Dendritic cell treated with granulocyte-macrophage colony-stimulating factor and Interleukin-4, amounts not matched to agents 40 ng/mL and 50 ng/mL, for 4 days (primary cell): ENCODE measurements at regions of chr5 and their contacts with region 1.

Region 1: DNA sequence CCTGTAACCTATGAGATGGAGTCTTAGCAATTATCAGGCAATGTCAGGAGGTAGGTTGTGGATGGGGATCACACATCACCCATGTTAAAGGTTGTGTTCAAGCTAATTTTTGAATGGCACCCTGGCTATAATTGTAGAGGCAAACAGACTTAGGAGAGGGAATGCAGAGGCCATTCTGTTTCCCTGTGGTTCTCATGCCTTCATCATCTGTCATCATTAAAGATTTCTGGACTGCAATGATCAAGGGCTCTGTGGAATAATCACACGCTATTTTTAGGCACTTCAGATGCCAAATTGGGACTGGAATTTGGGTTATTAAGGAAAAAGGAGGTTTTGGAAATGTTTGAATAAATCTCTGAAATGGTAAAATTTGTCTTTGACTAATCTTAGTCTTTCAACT is 1065.4 kb downstream of the TAF11L14 start:
- H3K4me3 Mint-ChIP-seq: no peak overlapping the region
- H3K27ac Mint-ChIP-seq: no peak overlapping the region
- H3K4me1 Mint-ChIP-seq: peaks cover 10% of the 10 kb centered on the region
- H3K27me3 Mint-ChIP-seq: no peaks in the 10 kb centered on the region

Region 2: DNA sequence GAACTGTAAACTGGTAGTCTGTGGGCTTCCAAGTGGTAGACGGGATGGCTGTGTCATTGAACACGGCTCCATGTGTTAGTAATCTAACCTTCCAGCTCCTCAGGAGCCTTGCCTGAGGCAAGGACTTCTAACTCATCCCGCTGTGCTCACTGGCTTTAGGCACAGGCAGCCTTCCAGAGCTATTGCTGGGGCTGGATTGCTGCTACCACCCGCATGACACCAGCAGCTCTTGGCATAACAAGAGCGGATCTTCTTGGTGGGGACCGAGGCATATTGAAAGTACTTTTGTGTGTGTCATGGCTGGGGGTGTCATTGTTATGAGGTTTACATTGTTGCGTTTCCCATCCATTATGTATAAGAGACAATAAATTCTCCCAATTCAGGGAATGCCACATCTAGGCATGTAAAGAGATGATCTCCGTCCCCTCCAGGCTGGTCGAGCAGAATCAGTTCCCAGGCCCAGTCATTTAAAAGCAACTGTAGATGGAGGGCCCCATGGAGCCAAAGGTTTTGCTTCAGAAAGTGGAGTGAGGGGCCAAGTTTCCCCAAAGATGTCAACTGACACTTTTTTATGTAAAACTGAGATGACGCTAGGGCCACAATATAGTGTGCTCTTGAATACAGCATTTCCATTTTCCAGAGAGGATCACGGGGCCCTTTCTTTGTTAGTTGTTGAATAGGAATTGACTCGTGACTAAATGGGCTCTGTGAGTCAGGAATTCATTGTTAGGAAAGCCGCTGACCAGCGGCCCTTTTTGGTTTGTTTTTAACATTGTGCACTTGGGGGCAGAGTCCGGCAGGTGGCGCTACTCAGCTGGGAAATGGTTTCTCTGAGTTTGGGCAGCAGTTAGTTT is 305.9 kb before region 1 on chr5:
- intact Hi-C with region 1: loop called (anchors 10 kb)
- H3K4me3 Mint-ChIP-seq: no peak overlapping the region
- H3K27ac Mint-ChIP-seq: no peak overlapping the region
- H3K4me1 Mint-ChIP-seq: no peaks in the 10 kb centered on the region
- H3K27me3 Mint-ChIP-seq: no peaks in the 10 kb centered on the region

Region 3: DNA sequence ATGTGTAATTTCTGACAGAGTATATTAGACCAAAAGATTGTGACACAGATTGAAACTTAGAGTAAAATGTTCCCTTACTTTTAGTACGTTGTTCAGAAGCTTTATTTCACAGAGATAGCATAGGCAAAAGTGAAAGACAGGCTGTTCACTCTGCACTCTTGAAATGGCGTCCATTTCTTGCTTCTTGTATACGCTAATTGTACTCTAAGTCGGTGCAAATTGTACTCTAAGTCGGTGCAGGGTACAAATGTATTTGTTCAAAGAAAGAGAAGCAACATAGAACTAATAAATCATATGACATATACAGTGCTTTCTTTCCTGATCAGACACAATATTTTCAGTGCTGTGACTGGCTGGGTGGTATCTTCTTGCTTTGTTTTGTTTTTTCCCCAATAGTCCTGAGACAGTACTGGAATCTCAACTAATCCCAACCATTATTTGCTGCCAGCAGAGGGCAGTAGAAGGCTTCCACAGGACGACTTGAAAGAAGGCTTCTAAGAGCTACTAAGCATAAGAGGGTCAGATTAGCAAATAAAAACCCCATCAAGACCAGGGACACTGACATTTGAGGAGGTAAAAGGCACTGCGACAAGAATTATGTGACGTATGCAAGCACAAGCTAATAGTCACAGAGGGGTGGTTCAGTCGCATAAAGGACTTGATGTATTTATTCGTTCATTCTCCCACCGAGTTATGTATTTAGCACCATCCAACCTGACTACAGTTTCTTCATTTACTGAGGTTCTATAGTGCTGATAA is 233.7 kb before region 1 on chr5:
- intact Hi-C with region 1: loop called (anchors 1 kb)
- H3K4me3 Mint-ChIP-seq: no peak overlapping the region
- H3K27ac Mint-ChIP-seq: no peak overlapping the region
- H3K4me1 Mint-ChIP-seq: no peaks in the 10 kb centered on the region
- H3K27me3 Mint-ChIP-seq: no peaks in the 10 kb centered on the region

Region 4: GRCh38 chr5:18749763-18750162 is 50.1 kb after region 1 on chr5:
- intact Hi-C with region 1: loop called (anchors 5 kb)
- H3K4me3 Mint-ChIP-seq: no peak overlapping the region
- H3K27ac Mint-ChIP-seq: no peak overlapping the region
- H3K4me1 Mint-ChIP-seq: peaks cover 10% of the 10 kb centered on the region
- H3K27me3 Mint-ChIP-seq: no peaks in the 10 kb centered on the region

Region 5: GRCh38 chr5:18954239-18954638 is 254.6 kb after region 1 on chr5:
- intact Hi-C with region 1: no loop called
- H3K4me3 Mint-ChIP-seq: no peak overlapping the region
- H3K27ac Mint-ChIP-seq: no peak overlapping the region
- H3K4me1 Mint-ChIP-seq: no peaks in the 10 kb centered on the region
- H3K27me3 Mint-ChIP-seq: no peaks in the 10 kb centered on the region